ENCODE measurements at regions of chr14 and their contacts with region 1.

Region 1: DNA sequence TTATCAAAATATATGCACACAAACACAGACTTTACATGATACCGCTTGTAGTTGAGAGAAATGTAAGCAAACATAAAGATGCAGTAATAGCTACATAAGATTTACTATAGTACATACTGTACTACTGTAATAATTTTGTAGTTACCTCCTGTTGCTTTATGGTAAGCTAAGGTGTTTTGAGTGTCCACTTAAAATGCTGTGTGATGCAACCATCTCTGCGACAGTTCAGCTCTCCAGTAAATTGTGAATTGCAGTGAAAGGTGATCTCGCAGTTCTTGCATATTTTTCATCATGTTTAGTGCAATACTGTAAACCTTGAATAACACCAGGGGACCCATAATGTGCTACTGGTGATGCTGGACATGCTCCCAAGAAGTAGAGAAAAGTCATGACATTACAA is 21.6 kb downstream of the ZC3H14 start:
- DNase-seq: no peak
- H3K4me3 ChIP-seq: no peak overlapping the region
- H3K27ac ChIP-seq: no peak overlapping the region
- H3K4me1 ChIP-seq: no peaks in the 10 kb centered on the region
- H3K27me3 ChIP-seq: no peaks in the 10 kb centered on the region
- CTCF ChIP-seq: no peak
- POLR2A ChIP-seq: no peak

Region 2: GRCh38 chr14:88834883-88835431 is 250.5 kb after region 1 on chr14:
- intact Hi-C with region 1: loop called (anchors 5 kb)
- DNase-seq: no peak
- H3K4me3 ChIP-seq: no peak overlapping the region
- H3K27ac ChIP-seq: peak overlapping the region; percentile 34 to 75
- H3K4me1 ChIP-seq: peaks cover 0 to 14% of the 10 kb centered on the region in 2 donors
- H3K27me3 ChIP-seq: no peaks in the 10 kb centered on the region
- CTCF ChIP-seq: no peak
- POLR2A ChIP-seq: no peak

Region 3: DNA sequence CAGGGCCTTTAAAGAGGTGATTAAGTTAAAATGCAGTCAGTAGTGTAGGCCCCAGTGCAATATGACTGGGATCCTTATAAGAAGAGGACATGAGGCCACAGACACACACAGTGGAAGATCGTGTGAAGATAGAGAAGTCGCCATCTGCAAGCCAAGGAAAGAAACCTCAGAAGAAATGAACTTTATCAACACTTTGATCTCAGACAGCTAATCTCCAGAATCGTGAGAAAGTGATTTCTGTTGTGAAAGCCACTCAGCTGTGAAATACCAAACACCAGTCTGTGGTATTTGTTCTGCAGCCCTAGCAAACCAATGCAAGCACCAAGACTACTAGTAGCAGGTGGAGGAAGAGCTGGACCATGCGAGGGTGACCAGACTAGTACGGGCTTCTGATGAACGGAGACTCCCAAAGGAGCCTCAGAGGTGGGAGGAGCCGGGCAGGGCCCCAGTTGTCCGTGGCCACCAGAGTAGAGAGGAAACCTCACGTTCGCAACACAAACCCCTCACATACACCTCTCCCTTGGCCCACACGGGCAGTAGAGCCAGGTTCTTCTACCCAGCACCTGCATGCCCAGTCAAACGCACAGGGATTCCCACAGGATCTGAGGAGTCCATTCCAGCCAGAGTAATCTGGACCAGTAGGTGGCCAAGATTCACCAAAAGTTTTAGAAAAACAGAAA is 483.0 kb after region 1 on chr14:
- intact Hi-C with region 1: no loop called
- DNase-seq: no peak
- H3K4me3 ChIP-seq: no peak overlapping the region
- H3K27ac ChIP-seq: no peak overlapping the region
- H3K4me1 ChIP-seq: no peaks in the 10 kb centered on the region
- H3K27me3 ChIP-seq: no peaks in the 10 kb centered on the region
- CTCF ChIP-seq: no peak
- POLR2A ChIP-seq: no peak